ENCODE measurements at regions of chr10 and their contacts with region 1.

Region 1: GRCh38 chr10:120735773-120736371 is 115.3 kb upstream of the WDR11 start:
- DNase-seq: peak in 1 of 42 donors; percentile 20

Region 2: DNA sequence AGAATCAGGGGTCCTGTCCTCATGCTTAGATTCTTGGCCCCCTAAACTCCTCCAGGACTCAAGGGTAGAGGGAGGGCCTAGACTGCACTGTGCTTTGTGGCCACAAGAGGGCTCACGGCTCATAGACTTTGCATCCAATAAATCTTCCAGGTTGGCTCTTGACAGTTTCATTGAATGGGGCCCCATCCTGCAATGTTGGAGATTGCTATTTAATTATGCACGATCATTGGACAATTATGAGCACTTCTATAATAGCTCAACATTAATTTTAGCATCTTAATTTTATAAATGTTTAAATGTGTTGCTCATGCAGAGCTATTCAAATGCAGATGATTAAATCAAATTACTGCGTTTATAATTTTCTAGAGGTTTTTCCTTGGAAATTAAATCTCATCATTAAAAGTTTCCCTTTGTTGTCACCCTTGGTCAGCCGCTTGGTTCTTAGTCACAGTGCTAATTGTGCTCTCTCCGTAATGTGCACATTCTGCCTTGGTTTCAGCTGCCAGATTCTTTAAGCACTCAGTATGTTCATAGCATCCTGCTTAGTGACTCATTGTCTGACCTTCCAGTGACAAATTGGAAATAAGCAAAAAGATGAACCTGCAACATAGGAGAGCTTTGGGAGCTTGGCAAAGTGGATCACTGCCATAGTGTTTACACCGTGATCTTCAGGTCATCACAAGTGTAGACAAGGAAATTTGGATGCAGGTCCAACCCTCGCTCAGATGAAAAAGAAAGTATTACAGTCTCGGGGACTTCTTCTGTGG is 312.3 kb before region 1 on chr10:
- intact Hi-C with region 1: loop called (anchors 10 kb)
- DNase-seq: peak in 41 of 42 donors; percentile 35 to 86 (median 63)